ENCODE measurements at regions of chr13 and their contacts with region 1.

Region 1: DNA sequence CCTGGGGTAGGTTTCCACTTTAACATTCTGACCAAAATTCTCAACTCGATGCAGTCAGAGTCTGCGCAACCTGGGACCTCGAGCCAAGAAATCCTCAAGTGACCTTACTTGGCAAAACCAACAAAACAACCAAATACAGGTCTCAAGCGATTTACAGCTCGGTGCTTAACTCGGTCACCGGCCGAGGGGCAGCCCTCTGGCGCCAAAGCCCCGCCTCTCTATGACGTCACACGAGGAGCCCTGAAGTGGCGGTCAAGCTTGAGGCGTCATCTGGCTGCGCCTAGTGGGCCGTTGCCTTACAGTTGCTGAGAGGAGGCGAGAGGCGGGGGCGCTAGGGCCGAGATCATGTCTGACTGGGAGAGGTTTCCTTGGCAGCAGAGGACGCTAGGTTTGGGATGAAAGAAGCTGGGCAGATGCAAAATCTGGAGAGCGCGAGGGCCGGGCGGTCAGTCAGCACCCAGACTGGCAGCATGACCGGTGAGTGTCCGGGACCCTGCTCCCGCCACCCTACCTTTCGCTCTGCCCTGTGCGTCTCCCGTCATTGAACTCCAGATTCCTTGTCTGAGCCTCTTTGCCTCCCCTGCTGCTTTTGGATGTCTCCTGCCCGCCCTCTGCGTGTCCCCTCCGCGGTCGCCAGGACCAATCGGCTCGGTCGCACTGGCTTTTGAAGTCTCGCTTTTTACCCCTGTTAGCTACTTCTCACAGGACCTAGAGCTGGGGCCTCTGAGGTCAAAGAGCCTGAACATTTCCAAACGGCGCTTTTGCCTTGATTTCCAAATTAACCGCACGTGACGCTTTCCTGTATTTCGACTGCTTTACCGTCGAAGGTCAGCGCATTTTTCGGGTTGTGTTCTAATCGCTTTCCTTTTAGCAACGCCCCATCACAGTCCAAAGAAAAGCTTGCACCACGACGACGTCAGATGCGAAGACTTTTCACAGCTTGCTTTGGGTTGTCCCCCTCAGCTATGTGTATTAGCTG is at the start of gene CDADC1:
- DNase-seq: peak; percentile 96
- H3K4me3 Mint-ChIP-seq: peak within 1 kb of the TSS; percentile 98
- H3K27ac Mint-ChIP-seq: peak within 1 kb of the TSS; percentile 92
- H3K4me1 Mint-ChIP-seq: peaks cover 34% of the 10 kb centered on the region
- H3K27me3 Mint-ChIP-seq: no peaks in the 10 kb centered on the region
- total RNA-seq, gene CDADC1: 13.2 to 14.7 TPM

Region 2: DNA sequence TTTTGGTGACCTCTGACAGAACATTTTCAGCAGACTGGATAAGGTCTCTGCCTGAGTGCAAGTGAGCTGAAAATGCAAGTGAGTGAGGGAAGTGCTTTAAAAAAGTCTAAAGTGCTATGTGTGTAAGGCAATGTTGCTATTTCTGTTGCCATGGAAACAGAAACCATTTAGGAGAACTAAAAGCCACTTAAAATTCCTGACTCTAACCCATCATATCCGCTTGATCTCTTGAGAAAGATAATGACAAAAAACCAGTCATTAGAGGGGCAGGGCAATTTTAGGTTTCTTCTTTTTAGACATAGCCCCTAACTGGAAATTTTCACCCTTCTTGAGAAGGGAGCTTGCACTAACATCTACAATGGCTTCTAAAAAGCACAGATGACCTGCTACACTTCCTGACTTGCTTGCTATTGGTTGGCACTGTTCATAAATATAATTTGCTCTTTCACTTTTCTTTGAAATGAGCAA is 594.4 kb before region 1 on chr13 and contains the start of gene CYSLTR2:
- CTCF ChIA-PET with region 1: no interaction called
- intact Hi-C with region 1: loop called (anchors 5 kb)
- DNase-seq: peak; percentile 27
- H3K4me3 Mint-ChIP-seq: peak within 1 kb of the TSS; percentile 75
- H3K27ac Mint-ChIP-seq: peak within 1 kb of the TSS; percentile 82
- H3K4me1 Mint-ChIP-seq: peaks cover 29% of the 10 kb centered on the region
- H3K27me3 Mint-ChIP-seq: no peaks in the 10 kb centered on the region
- total RNA-seq, gene CYSLTR2: 1.3 to 1.7 TPM

Region 3: GRCh38 chr13:49220036-49220855 is 27.7 kb before region 1 on chr13 and contains the start of gene MLNR:
- CTCF ChIA-PET with region 1: interaction called, 5 read pairs
- intact Hi-C with region 1: loop called (anchors 2 kb)
- DNase-seq: peak; percentile 62
- H3K4me3 Mint-ChIP-seq: peak within 1 kb of the TSS; percentile 65
- H3K27ac Mint-ChIP-seq: no peak within 1 kb of the TSS
- H3K4me1 Mint-ChIP-seq: peaks cover 2% of the 10 kb centered on the region
- H3K27me3 Mint-ChIP-seq: peaks cover 56% of the 10 kb centered on the region
- total RNA-seq, gene MLNR: not detected

Region 4: DNA sequence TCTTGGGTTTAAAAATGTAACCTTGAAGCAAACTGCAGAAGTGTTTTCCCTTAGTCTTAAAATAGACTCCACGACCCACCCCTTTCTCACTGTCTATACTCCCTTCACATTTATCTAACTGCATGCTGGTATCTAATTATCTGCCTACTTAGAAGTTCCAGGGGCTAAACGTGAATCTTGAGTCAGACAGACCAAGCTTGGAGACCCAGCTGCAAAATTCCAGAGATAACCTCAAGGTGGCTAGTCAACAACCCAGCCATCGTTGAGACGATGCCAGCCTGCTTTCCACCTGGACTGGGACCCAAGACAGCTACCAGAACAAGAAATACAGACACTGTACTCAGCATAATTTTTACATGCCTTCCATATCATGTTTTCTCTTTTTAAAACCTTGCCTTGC is 81.9 kb after region 1 on chr13:
- CTCF ChIA-PET with region 1: no interaction called
- intact Hi-C with region 1: no loop called
- DNase-seq: no peak
- H3K4me3 Mint-ChIP-seq: no peak overlapping the region
- H3K27ac Mint-ChIP-seq: no peak overlapping the region
- H3K4me1 Mint-ChIP-seq: no peaks in the 10 kb centered on the region
- H3K27me3 Mint-ChIP-seq: no peaks in the 10 kb centered on the region

Region 5: DNA sequence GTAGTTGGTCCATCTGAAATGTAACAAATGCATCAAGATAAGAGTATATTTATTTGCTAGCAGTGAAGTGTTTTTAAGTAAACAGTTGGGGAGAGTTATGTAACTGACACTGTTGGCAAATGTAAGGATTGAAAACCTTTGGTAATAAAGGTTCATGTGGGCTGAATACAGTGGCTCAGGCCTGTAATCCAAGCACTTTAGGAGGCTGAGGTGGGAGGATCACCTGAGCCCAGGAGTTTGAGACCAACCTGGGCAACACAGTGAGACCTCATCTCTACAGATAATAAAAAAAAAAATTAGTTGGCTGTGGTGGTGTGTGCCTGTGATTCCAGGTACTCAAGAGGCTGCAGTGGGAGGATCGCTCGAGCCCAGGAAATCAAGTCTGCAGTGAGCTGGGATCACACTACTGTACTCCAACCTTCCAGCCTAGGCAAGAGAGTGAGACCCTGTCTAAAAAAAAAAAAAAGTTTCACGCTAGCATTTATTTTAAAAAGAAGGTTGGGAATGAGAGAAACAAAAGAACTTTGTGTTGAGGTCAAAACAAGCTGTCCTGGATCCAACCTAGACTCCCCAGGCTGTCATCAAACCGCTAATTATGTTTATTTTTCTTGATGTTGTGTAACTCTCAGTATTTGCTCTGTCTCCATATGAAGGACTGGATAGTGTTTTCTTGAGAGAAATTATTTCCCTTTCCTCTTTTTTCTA is 216.8 kb after region 1 on chr13:
- CTCF ChIA-PET with region 1: no interaction called
- intact Hi-C with region 1: no loop called
- DNase-seq: no peak
- H3K4me3 Mint-ChIP-seq: no peak overlapping the region
- H3K27ac Mint-ChIP-seq: no peak overlapping the region
- H3K4me1 Mint-ChIP-seq: no peaks in the 10 kb centered on the region
- H3K27me3 Mint-ChIP-seq: no peaks in the 10 kb centered on the region

Region 6: DNA sequence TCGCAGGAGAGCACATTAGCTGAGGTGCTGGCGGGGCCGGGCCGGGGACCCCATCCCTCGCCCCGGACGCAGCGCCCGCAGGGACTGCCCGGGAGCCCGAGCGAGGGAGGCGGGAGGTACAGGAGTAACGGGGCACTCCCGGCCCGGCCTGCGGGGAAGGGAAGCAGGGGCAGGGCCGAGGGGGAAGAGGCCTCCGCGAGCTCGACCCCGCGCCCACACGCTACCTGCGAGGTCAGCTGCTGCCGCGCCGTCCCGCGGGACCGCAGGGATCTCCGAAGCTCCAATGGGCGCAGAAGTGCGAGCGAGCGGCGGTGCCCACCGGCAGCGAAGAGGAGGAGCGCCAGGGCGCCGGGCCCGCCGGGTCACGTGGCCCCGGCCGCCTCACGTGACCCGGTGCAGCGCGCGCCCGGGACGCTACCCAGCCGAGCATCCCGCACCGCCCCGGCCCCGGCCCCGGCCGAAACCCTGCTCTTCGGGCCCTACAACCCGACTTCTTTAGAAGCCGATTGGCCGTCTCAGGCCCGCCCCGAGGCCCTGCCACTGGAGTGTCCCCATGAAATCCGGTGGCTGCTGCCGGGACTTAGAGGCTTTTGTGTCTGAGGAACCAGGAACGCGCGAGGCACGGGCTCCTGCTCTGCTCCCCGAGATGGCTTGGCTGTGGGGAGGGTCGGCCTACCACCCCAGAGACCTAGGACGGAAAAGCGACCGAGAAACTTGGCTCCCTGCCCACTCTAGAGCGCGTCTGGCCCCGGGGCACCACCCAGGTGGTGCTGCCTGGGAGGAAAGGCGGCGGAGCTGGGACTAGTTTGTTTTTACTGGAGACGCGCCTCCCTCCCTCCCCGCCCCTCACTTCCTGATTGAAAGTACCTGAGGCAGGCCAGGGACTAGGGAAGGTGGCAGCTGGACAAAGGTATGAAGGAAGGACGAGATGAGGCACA is 337.6 kb after region 1 on chr13 and contains the start of gene RCBTB1:
- CTCF ChIA-PET with region 1: no interaction called
- intact Hi-C with region 1: loop called (anchors 5 kb)
- DNase-seq: peak; percentile 56
- H3K4me3 Mint-ChIP-seq: peak within 1 kb of the TSS; percentile 88
- H3K27ac Mint-ChIP-seq: peak within 1 kb of the TSS; percentile 61
- H3K4me1 Mint-ChIP-seq: peaks cover 25% of the 10 kb centered on the region
- H3K27me3 Mint-ChIP-seq: no peaks in the 10 kb centered on the region
- total RNA-seq, gene RCBTB1: 17.8 to 19.2 TPM

Region 7: DNA sequence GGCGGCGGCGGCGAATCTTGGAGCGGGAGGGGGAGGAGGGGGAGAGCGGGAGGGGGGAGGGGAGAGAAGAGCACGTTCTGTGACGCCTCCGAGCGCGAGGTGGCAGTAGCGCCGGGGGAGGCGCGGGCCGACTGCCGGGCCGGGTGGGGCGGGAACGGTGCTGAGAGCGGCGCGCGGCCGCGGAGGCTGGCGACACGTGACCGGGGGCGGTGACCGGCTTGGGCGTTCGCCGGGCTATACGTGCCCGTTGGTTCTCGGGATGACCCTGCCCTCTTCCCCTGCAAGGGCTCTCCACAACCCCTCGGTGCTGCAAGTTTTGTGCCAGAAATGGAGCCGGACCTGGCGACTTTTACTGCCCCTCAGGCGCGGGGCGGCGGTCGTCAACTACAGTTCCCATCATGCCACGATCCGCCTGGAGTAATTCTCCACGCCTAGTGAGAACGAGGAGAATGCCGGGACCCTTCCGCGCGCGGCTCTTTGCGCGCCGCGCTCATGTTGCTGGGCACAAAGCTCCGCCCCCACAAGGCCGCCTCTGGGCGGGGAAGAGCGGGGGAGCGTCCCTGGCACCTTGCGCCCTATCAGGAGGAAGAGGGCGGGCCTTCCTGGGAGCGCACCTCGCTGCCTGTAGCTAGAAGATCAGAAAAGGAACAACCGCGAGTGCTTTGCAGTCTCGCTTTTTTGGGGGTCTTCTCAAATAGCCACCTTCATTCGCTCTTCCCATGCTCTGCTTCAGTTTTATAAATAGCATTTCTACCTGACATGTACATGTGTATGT is 544.8 kb after region 1 on chr13 and contains the start of gene KPNA3:
- CTCF ChIA-PET with region 1: no interaction called
- intact Hi-C with region 1: loop called (anchors 2 kb)
- DNase-seq: peak; percentile 96
- H3K4me3 Mint-ChIP-seq: peak within 1 kb of the TSS; percentile 92
- H3K27ac Mint-ChIP-seq: peak within 1 kb of the TSS; percentile 94
- H3K4me1 Mint-ChIP-seq: peaks cover 29% of the 10 kb centered on the region
- H3K27me3 Mint-ChIP-seq: peaks cover 4% of the 10 kb centered on the region
- total RNA-seq, gene KPNA3: 47.9 to 50.7 TPM

Measured in activated naive CD4-positive, alpha-beta T cell treated with anti-CD3 and anti-CD28 coated beads for 36 hours (primary cell).